Dendritic cell treated with granulocyte-macrophage colony-stimulating factor and Interleukin-4, amounts not matched to agents 40 ng/mL and 50 ng/mL, for 4 days (primary cell): ENCODE measurements at regions of chr10 and their contacts with region 1.

Region 1: GRCh38 chr10:15725603-15726002 is 5.9 kb upstream of the ITGA8 start:
- H3K4me3 Mint-ChIP-seq: no peak overlapping the region
- H3K27ac Mint-ChIP-seq: no peak overlapping the region
- H3K4me1 Mint-ChIP-seq: no peaks in the 10 kb centered on the region
- H3K27me3 Mint-ChIP-seq: peaks cover 17% of the 10 kb centered on the region

Region 2: GRCh38 chr10:15433850-15434537 is 291.6 kb before region 1 on chr10:
- intact Hi-C with region 1: loop called (anchors 5 kb)
- H3K4me3 Mint-ChIP-seq: peak overlapping the region; percentile 80
- H3K27ac Mint-ChIP-seq: no peak overlapping the region
- H3K4me1 Mint-ChIP-seq: peaks cover 7% of the 10 kb centered on the region
- H3K27me3 Mint-ChIP-seq: peaks cover 8% of the 10 kb centered on the region

Region 3: GRCh38 chr10:15624401-15625196 is 101.0 kb before region 1 on chr10:
- intact Hi-C with region 1: no loop called
- H3K4me3 Mint-ChIP-seq: no peak overlapping the region
- H3K27ac Mint-ChIP-seq: no peak overlapping the region
- H3K4me1 Mint-ChIP-seq: no peaks in the 10 kb centered on the region
- H3K27me3 Mint-ChIP-seq: no peaks in the 10 kb centered on the region

Region 4: DNA sequence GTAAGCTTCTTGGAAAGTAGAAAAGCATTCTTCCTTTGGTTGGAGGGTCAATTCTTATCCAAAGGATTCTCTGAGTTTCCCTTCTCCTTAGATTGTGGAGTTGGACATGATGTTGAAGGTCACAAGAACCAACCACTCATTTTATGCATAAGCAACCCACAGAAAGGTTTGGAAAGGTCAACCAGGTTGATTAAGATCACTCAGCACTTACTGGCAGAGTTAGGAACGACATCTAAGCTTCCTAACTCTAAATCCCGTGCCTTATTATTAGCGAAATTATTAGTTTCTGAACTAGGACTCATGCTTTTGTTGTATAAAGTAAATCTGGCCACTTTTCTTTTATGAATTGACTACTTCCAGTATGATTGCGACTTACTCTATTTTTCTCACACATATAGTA is 271.7 kb after region 1 on chr10:
- intact Hi-C with region 1: no loop called
- H3K4me3 Mint-ChIP-seq: no peak overlapping the region
- H3K27ac Mint-ChIP-seq: no peak overlapping the region
- H3K4me1 Mint-ChIP-seq: no peaks in the 10 kb centered on the region
- H3K27me3 Mint-ChIP-seq: no peaks in the 10 kb centered on the region